Common myeloid progenitor, CD34-positive (primary cell): ENCODE measurements at regions of chr1 and their contacts with region 1.

Region 1: GRCh38 chr1:201481761-201482493 is 12.9 kb upstream of the PHLDA3 start:
- DNase-seq: peak; percentile 92 to 94 (median 93)
- H3K4me3 ChIP-seq: peak overlapping the region in 5 of 7 experiments; percentile 31 to 79 (median 66)
- H3K27ac ChIP-seq: no peak overlapping the region
- H3K4me1 ChIP-seq: peaks cover 4 to 59% (median 41%) of the 10 kb centered on the region in 4 experiments
- H3K27me3 ChIP-seq: peaks cover 0 to 3% (median 0%) of the 10 kb centered on the region in 5 experiments

Region 2: DNA sequence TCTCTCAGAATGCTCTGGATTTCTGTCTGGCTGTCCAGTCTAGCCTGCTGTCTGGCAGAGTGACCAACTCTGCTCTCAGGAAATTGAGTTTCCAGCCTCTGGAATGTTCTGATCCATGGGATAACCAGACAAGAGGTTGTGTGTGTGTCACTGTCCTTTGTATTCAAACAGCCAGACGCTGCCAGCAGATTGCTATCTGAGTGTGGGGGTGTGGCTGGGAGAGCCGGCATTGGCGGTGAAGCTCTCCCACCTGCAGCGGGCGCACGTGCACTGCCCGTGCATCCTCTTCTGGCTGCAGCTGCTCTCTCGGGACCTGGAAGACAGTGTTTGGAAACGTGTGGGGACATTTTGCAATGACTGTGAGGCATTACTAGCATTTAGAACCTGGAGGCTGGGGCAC is 172.5 kb before region 1 on chr1:
- CTCF ChIA-PET with region 1: no interaction called
- POLR2A ChIA-PET with region 1: no interaction called
- DNase-seq: peak; percentile 23 to 72 (median 51)
- H3K4me3 ChIP-seq: no peak overlapping the region
- H3K27ac ChIP-seq: no peak overlapping the region
- H3K4me1 ChIP-seq: no peaks in the 10 kb centered on the region
- H3K27me3 ChIP-seq: peaks cover 0 to 35% (median 16%) of the 10 kb centered on the region in 5 experiments

Region 3: GRCh38 chr1:201436393-201436792 is 45.5 kb before region 1 on chr1:
- CTCF ChIA-PET with region 1: interaction called, 353 read pairs
- POLR2A ChIA-PET with region 1: no interaction called
- DNase-seq: no peak
- H3K4me3 ChIP-seq: no peak overlapping the region
- H3K27ac ChIP-seq: no peak overlapping the region
- H3K4me1 ChIP-seq: peaks cover 0 to 5% (median 3%) of the 10 kb centered on the region in 4 experiments
- H3K27me3 ChIP-seq: peaks cover 0 to 3% (median 0%) of the 10 kb centered on the region in 5 experiments

Region 4: DNA sequence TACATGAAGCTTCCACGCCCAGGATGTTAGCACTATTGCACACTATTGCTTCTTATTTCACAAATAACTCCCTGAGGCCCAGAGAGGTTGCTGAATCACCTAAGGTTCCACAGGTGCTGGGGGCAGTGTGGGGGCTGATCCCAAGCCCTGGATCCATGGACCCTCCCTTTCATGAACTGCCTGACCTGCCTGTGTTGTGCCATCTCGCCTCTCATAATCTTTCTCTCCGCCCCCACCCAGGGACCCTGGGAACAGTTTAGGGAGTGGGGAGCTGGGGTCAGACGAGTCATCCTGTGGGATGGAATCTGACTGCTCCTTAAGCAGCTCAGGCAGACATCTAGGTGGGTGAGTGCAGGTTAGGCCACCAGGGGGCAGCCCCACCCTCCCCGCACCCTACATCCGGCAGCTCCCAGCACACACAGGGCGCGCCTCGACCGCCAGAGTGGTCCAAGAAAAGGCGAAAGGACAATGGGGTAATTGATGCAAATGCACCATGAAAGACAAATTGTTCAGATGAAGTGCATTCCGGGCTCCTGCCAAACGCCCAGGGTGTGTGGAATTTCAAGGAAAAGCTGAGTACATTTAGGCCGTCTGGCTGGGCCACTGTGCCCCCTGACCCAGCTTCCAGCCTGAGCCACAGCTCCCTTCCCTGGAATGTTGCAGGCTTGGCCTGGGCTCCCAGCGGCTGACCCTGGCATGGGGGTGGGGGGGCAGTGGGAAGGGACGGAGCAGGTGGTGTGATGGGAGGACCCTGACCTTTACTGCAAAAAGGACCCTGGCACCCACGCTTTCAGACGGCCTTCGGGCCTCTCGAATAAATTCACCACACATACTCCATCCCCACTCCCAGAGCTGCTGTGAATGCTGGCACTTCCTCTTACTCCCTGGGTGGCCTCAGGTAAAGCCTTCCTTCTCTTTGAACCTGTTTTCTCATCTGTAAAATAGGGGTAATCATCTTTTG is 33.7 kb before region 1 on chr1:
- CTCF ChIA-PET with region 1: interaction called, 353 read pairs
- POLR2A ChIA-PET with region 1: interaction called, 14 read pairs
- DNase-seq: peak; percentile 71 to 77 (median 72)
- H3K4me3 ChIP-seq: no peak overlapping the region
- H3K27ac ChIP-seq: no peak overlapping the region
- H3K4me1 ChIP-seq: peaks cover 0 to 20% (median 12%) of the 10 kb centered on the region in 4 experiments
- H3K27me3 ChIP-seq: peaks cover 0 to 1% (median 0%) of the 10 kb centered on the region in 5 experiments

Region 5: GRCh38 chr1:201468844-201469511 is 12.9 kb before region 1 on chr1 and contains the start of gene PHLDA3:
- CTCF ChIA-PET with region 1: interaction called, 31 read pairs
- POLR2A ChIA-PET with region 1: interaction called, 10 read pairs
- DNase-seq: peak; percentile 70 to 92 (median 90)
- H3K4me3 ChIP-seq: peak within 1 kb of the TSS; percentile 22 to 78 (median 63)
- H3K27ac ChIP-seq: no peak within 1 kb of the TSS
- H3K4me1 ChIP-seq: peaks cover 0 to 25% (median 20%) of the 10 kb centered on the region in 4 experiments
- H3K27me3 ChIP-seq: peaks cover 0 to 11% (median 5%) of the 10 kb centered on the region in 5 experiments

Region 6: DNA sequence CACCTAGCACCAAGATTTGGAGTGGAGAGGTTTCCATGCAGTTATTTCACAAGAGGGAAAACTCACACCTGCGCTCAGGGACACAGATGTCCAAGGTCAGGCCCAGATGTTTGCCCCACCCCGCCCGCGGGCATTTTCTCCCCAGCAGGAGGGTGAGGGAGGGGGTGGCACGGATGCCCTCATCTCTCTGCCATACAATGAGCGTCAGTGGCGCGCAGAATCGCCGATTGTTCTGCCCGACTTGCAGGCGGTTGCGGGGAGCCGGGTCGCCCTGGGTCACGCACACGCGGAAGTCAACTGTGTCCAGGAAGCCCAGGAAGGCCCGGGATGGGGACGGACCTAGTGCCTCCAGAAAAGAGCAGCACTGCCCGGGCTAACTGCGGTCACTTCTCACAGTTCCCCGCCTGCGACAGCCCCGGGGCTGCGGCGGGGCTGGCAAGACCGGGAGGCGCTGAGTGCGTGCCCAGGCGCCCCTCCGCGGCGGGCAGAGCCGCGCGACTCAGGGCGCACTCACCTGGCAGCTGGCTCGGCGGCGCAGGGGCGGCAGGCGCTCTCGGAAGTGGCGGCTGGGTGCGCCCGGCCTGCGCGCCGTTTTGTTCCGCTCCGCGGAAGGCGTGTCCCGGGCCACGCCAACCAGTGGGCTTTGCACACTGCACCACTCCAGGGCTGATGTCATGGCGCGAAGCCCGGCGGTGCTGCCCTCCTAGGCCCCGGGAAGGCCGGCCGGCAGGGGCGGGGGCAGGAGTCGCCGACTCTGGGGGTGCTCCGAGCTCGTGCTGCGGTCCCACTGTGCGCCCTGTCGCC is 24.8 kb after region 1 on chr1 and contains the start of gene CSRP1:
- CTCF ChIA-PET with region 1: interaction called, 1,059 read pairs
- POLR2A ChIA-PET with region 1: interaction called, 11 read pairs
- DNase-seq: peak; percentile 80 to 91 (median 87)
- H3K4me3 ChIP-seq: peak within 1 kb of the TSS; percentile 67 to 86 (median 76)
- H3K27ac ChIP-seq: peak within 1 kb of the TSS; percentile 54 to 72
- H3K4me1 ChIP-seq: peaks cover 1 to 53% (median 43%) of the 10 kb centered on the region in 4 experiments
- H3K27me3 ChIP-seq: no peaks in the 10 kb centered on the region

Region 7: GRCh38 chr1:201530741-201531531 is 49.0 kb after region 1 on chr1:
- CTCF ChIA-PET with region 1: interaction called, 20 read pairs
- POLR2A ChIA-PET with region 1: no interaction called
- DNase-seq: peak; percentile 77 to 83 (median 79)
- H3K4me3 ChIP-seq: peak overlapping the region in 1 of 7 experiments; percentile 14
- H3K27ac ChIP-seq: no peak overlapping the region
- H3K4me1 ChIP-seq: peaks cover 0 to 38% (median 29%) of the 10 kb centered on the region in 4 experiments
- H3K27me3 ChIP-seq: no peaks in the 10 kb centered on the region

Region 8: DNA sequence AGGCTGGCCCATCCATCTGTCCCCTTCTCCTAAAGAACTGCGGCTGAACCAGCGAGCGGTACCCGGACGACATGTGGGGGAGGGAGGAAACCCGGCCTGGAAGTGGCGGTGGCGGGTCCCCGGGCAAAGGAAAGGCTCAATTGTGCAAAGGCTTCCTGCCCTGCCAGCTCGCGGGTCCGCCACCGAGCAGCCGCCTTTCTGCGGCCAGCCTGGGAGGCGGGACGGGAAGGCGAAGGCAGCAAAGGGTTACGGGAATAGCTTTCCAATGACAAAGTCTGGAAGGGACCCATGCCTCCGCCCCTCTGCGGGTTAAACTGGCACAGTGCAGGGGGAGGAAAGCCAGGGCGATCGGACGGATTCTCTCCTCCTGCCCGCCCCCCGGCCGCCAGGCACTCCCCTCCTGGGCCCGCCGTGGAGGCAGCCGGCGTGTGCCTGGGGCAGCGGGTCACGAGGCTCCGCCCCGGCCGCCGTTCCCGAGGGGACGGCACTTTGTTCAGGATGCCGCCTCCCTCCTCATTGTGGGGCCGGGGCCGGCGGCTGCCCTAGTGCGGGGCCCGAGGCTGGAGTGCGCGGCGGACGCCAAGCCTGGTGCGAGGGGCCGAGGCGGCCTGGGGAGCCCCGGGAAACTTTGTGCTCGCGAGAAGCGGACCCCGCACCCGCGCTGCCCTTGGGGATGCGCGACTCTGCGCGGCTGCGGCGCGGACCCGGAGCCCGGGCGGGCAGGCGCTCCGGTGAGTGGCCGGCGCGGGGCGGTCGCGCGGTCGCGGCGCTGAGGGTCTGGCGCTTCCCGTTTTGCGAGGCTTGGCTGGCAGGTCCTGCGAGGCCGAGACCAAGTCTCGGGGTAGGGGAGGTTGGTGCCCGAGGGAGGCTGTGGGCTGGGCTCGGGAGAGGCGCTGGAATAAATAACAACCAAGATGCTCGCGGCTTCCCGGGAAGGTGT is 57.0 kb after region 1 on chr1 and contains the start of gene NAV1:
- CTCF ChIA-PET with region 1: interaction called, 12 read pairs
- POLR2A ChIA-PET with region 1: no interaction called
- DNase-seq: peak in 2 of 3 donors; percentile 54 to 69
- H3K4me3 ChIP-seq: peak within 1 kb of the TSS; percentile 58 to 89 (median 73)
- H3K27ac ChIP-seq: no peak within 1 kb of the TSS
- H3K4me1 ChIP-seq: peaks cover 0 to 56% (median 50%) of the 10 kb centered on the region in 4 experiments
- H3K27me3 ChIP-seq: peaks cover 0 to 1% (median 0%) of the 10 kb centered on the region in 5 experiments